GM10248 (cell line): ENCODE measurements at regions of chr3 and their contacts with region 1.

Region 1: DNA sequence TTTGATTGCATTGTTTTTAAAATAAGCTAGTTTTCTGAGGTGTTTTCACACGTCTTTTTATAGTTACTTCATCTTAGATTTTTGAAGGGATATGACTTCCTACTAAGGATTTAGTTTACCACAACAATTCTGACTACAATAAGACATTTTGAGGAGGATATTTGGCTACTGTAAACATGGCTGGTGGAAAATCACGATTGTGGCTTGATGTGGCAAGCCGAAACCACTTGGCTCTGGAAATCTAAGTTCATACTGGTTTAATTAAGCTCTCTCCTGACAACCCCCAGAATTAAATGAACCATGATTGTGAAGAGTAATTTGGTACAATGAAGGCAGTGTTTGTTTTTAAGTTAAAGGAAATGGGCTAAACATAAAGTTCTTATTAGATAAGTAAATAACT is 30.8 kb downstream of the ST3GAL6 start:
- DNase-seq: no peak
- CTCF ChIP-seq: no peak

Region 2: GRCh38 chr3:98778852-98779413 is 15.0 kb before region 1 on chr3:
- CTCF ChIA-PET with region 1: interaction called, 10 read pairs
- POLR2A ChIA-PET with region 1: no interaction called
- DNase-seq: no peak
- CTCF ChIP-seq: no peak